RWPE1 (cell line): ENCODE measurements at regions of chr5 and their contacts with region 1.

Region 1: DNA sequence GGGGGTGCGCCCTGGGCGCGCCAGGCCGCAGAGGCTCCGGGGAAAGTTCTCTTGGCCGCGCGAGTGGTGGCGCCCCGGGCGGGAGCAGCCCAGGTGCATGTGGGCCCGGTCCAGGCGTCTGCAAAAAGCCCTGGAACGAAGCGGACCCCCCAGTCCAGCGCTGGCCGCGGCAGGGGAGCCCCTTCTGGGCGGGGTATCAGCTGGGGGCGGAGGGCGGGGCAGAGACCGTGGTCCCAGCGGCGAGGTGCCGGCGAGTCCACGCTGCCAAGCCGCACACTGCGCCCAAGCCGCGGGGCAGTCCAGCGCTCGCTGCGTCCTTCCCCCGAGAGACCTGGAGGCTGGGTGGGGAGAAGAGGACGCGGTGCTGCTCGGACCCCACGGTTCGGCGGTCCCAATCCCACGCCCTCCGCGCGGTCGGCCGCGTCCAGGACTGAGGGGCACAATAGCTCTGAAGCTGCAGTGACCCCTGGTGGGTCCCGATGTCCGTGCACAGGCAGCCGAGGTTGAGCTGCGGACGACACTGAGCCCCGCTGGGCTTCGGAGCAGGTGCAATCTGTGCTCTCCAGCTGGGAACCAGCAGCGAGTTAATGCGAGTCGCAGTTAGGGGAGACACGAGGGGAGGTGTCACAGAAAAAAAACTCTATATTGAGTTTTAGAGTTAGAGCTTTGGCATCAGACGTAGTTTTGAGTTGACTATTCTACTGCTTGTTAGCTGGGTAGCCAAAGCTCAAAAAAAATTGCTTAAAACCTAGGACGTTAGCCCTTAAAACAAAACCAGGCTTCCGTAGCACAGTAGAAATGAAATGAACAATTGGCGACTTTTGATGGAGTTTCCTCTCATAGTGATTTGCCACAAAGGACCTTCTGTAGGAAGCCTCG is 1.1 kb upstream of the EPB41L4A start:
- DNase-seq: peak; percentile 89
- H3K27ac ChIP-seq: peak overlapping the region; percentile 91
- CTCF ChIP-seq: peak; percentile 99

Region 2: DNA sequence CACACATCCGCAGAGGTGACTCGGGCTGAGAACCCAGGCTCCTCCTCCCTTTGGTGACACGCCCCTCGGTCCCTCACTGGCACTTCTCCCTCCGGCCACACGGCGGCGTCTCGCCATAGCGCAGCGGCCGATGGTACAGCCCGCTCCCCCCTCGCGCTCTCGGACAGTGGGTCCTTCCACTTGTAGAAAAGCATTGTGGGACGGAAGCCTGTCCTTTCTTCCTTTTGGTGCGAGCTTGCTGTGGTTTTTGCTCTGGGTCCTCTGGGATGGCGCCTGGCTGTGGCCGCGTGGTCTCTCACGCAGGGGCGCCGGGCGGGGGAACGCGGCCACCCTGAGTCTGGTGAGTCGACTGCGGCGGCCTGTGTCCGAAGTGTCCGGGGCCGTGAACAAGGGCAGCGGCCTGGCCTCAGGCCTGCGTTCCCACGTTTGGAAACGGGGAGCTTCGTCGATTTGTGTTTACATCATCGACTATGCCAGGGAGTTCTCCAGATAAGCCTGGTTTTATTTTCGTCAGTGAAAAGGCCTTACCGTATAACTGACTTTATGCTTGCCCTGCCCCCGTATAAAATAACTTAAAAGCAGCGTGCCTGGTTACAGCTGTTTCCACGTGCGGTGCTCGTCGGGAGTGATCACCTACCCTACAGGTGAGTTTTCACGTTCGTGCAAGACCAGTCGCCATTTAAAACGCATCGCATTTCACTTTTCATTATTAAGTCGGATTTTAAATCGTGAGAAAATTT is 259.4 kb before region 1 on chr5:
- CTCF ChIA-PET with region 1: interaction called, 12 read pairs
- POLR2A ChIA-PET with region 1: no interaction called
- DNase-seq: peak; percentile 97
- H3K27ac ChIP-seq: peak overlapping the region; percentile 76
- CTCF ChIP-seq: peak; percentile 99

Region 3: GRCh38 chr5:112174959-112175594 is 245.1 kb before region 1 on chr5:
- CTCF ChIA-PET with region 1: interaction called, 38 read pairs
- POLR2A ChIA-PET with region 1: no interaction called
- DNase-seq: peak; percentile 69
- H3K27ac ChIP-seq: no peak overlapping the region
- CTCF ChIP-seq: peak; percentile 82

Region 4: DNA sequence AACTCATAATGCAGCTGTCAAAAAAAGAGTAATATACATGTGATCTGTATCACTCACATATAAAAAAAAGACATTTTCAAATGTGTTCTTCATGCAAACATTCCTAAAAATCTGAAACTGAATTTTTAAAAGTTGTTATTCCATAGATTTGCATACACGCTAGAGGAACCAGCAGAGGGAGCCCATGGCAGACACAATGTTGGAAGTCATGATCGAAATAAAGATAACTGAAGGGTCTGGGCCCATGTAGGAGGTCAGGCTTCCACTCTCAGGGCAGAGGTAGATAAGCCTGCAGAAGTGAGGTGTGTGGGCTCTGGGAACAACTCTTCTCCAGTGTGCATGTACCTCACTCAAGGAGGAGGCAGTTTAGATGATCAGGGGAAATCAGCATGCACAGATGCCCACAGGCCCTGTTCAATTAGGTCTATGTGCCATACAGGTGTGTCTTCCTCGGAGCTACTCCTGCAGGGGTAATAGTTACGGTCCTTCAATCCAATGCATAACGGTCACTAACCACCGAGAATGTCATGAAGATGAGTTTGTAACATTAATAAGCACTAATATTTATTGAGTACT is 209.7 kb before region 1 on chr5:
- CTCF ChIA-PET with region 1: interaction called, 30 read pairs
- POLR2A ChIA-PET with region 1: no interaction called
- DNase-seq: peak; percentile 30
- H3K27ac ChIP-seq: no peak overlapping the region
- CTCF ChIP-seq: peak; percentile 88

Region 5: GRCh38 chr5:112434641-112435040 is 14.4 kb after region 1 on chr5:
- CTCF ChIA-PET with region 1: interaction called, 12 read pairs
- POLR2A ChIA-PET with region 1: no interaction called
- DNase-seq: peak; percentile 27
- H3K27ac ChIP-seq: no peak overlapping the region
- CTCF ChIP-seq: no peak